Mucosa of descending colon (tissue), 3 donors: ENCODE measurements at regions of chr14 and their contacts with region 1.

Region 1: GRCh38 chr14:55152052-55152753 is 23.2 kb downstream of the LGALS3 start:
- DNase-seq: no peak
- ATAC-seq: no peak
- H3K4me3 ChIP-seq: no peak overlapping the region
- H3K4me1 ChIP-seq: no peaks in the 10 kb centered on the region
- CTCF ChIP-seq: no peak

Region 2: DNA sequence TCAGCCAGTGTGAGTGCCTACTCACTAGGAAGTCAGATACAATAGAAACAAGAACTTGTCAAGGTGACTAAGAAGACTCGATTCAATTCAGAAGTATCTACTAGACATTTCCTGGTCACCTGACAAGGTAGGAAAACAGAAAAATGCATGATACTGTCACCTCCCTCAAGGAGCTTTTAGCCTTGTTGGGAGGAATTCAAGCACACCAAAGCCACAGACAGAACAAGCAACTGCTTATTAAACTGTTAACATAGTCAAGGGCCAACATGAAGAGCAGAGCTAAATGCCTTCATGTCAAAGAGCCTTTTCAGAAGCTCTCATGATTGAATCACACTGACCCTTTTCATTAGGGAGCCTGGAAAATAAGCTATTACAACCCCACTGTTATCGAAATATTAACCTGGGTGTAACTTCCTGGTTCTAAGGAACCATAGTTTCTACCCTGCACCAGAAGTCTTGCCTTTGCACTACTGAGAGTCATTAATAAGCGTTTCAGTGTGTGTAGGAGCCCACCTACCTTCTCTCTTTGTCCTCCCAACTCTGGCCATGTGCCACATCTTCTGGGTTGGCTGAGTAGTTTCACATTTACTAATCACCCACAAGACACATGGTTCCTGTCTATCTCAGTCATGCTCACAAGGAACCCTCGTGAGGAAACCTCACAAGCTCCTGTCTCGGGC is 54.2 kb before region 1 on chr14:
- intact Hi-C with region 1: loop called in 1 of 2 experiments (anchors 10 kb)
- DNase-seq: peak in 1 of 3 donors; percentile 69
- ATAC-seq: peak; percentile 54
- H3K4me3 ChIP-seq: no peak overlapping the region
- H3K4me1 ChIP-seq: peaks cover 33% of the 10 kb centered on the region
- CTCF ChIP-seq: no peak